Naive thymus-derived CD4-positive, alpha-beta T cell (primary cell): ENCODE measurements at regions of chr4 and their contacts with region 1.

Region 1: DNA sequence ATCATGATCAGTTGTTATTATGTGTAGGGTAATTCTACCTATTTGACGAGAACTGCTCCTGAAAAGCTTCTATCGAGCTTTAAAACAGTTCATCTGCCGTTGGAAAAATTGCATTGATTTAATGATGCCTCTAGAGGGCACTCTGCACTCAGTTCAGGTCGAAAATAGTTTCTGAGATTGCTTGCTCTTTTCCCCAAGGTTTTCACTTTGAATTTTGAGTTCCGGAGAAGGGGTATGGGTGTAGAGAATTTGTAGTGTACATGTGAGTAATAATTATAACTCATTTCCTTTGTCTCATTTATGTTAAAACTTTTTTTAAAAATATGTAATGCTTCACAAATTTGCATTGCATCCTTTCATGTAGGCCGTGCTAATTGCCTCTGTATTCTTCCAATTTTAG is 28.4 kb upstream of the TNIP3 start:
- DNase-seq: peak in 5 of 9 donors; percentile 31 to 56 (median 50)
- ATAC-seq: peak; percentile 51
- H3K4me3 ChIP-seq: no peak overlapping the region
- H3K4me3 Mint-ChIP-seq: peak overlapping the region; percentile 22 to 88 (median 79)
- H3K27ac ChIP-seq: peak overlapping the region; percentile 18
- H3K27ac Mint-ChIP-seq: peak overlapping the region; percentile 62 to 92 (median 81)
- H3K4me1 ChIP-seq: peaks cover 32 to 50% of the 10 kb centered on the region in 2 donors
- H3K4me1 Mint-ChIP-seq: peaks cover 22 to 57% (median 52%) of the 10 kb centered on the region in 7 donors
- H3K27me3 ChIP-seq: no peaks in the 10 kb centered on the region
- H3K27me3 Mint-ChIP-seq: no peaks in the 10 kb centered on the region

Region 2: GRCh38 chr4:120616041-120616440 is 576.4 kb before region 1 on chr4:
- CTCF ChIA-PET with region 1: no interaction called
- POLR2A ChIA-PET with region 1: no interaction called
- intact Hi-C with region 1: no loop called
- DNase-seq: no peak
- ATAC-seq: no peak
- H3K4me3 ChIP-seq: no peak overlapping the region
- H3K4me3 Mint-ChIP-seq: no peak overlapping the region
- H3K27ac ChIP-seq: no peak overlapping the region
- H3K27ac Mint-ChIP-seq: no peak overlapping the region
- H3K4me1 ChIP-seq: no peaks in the 10 kb centered on the region
- H3K4me1 Mint-ChIP-seq: no peaks in the 10 kb centered on the region
- H3K27me3 ChIP-seq: no peaks in the 10 kb centered on the region
- H3K27me3 Mint-ChIP-seq: peaks cover 0 to 16% (median 10%) of the 10 kb centered on the region in 5 donors

Region 3: DNA sequence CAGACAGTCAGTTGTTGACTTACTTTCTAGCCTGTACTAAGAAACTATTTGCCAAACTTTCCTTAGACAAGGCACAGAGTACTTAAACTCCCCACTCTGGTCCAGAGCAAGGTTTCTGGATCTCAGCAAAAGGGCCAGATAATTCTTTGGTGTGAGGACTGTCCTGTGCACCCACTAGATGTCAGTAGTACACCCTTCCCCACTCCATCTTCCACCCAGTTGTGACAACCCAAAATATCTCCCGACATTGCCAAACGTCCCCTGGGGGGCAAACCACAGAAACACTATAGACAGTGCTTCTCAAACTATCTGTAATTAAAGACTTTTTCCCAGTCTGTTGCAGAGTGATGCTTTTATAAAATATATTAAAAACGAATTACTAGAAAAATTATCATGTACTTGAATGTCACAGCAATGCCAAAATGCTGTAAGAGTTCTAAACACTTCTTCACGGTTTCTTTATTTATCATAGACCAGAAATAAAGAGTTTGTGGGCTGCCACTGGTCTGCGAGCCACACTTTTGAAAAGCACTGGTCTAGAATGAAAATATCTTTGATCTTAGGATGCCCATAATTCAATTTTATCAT is 473.4 kb before region 1 on chr4:
- CTCF ChIA-PET with region 1: no interaction called
- POLR2A ChIA-PET with region 1: no interaction called
- intact Hi-C with region 1: loop called in 1 of 2 experiments (anchors 5 kb)
- DNase-seq: peak in 6 of 9 donors; percentile 6 to 40 (median 36)
- ATAC-seq: peak; percentile 82
- H3K4me3 ChIP-seq: no peak overlapping the region
- H3K4me3 Mint-ChIP-seq: no peak overlapping the region
- H3K27ac ChIP-seq: no peak overlapping the region
- H3K27ac Mint-ChIP-seq: no peak overlapping the region
- H3K4me1 ChIP-seq: no peaks in the 10 kb centered on the region
- H3K4me1 Mint-ChIP-seq: peaks cover 0 to 2% (median 0%) of the 10 kb centered on the region in 7 donors
- H3K27me3 ChIP-seq: no peaks in the 10 kb centered on the region
- H3K27me3 Mint-ChIP-seq: peaks cover 0 to 16% (median 0%) of the 10 kb centered on the region in 5 donors

Region 4: DNA sequence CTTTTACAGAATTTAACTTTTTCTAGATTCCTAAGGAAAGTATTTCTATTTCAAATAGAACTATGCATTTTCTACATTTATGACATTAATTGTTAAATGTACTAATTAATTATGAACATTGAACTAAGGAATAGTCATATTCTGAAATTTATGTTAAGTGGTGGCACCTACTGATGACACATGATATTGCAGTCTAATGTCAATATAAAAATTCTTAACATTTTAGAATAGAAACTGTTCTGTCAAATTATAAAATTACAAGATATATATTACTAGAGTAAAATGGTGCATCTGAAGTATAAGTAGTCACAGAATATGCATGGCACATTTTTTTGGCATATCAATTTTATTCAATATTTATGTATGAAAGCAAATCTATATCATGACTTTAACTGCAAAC is 80.0 kb before region 1 on chr4:
- CTCF ChIA-PET with region 1: interaction called, 6 read pairs
- POLR2A ChIA-PET with region 1: no interaction called
- intact Hi-C with region 1: loop called (anchors 2 kb)
- DNase-seq: no peak
- ATAC-seq: no peak
- H3K4me3 ChIP-seq: no peak overlapping the region
- H3K4me3 Mint-ChIP-seq: no peak overlapping the region
- H3K27ac ChIP-seq: no peak overlapping the region
- H3K27ac Mint-ChIP-seq: no peak overlapping the region
- H3K4me1 ChIP-seq: peaks cover 0 to 3% of the 10 kb centered on the region in 2 donors
- H3K4me1 Mint-ChIP-seq: peaks cover 0 to 25% (median 20%) of the 10 kb centered on the region in 7 donors
- H3K27me3 ChIP-seq: no peaks in the 10 kb centered on the region
- H3K27me3 Mint-ChIP-seq: peaks cover 0 to 29% (median 0%) of the 10 kb centered on the region in 5 donors

Region 5: GRCh38 chr4:121176082-121176934 is 16.2 kb before region 1 on chr4:
- CTCF ChIA-PET with region 1: interaction called, 15 read pairs
- POLR2A ChIA-PET with region 1: interaction called, 13 read pairs
- intact Hi-C with region 1: loop called in 1 of 2 experiments (anchors 2 kb)
- DNase-seq: no peak
- ATAC-seq: peak; percentile 17
- H3K4me3 ChIP-seq: no peak overlapping the region
- H3K4me3 Mint-ChIP-seq: peak overlapping the region in 9 of 10 donors; percentile 34 to 87 (median 63)
- H3K27ac ChIP-seq: no peak overlapping the region
- H3K27ac Mint-ChIP-seq: peak overlapping the region in 8 of 9 donors; percentile 21 to 96 (median 75)
- H3K4me1 ChIP-seq: peaks cover 44 to 65% of the 10 kb centered on the region in 2 donors
- H3K4me1 Mint-ChIP-seq: peaks cover 53 to 89% (median 84%) of the 10 kb centered on the region in 7 donors
- H3K27me3 ChIP-seq: no peaks in the 10 kb centered on the region
- H3K27me3 Mint-ChIP-seq: no peaks in the 10 kb centered on the region

Region 6: DNA sequence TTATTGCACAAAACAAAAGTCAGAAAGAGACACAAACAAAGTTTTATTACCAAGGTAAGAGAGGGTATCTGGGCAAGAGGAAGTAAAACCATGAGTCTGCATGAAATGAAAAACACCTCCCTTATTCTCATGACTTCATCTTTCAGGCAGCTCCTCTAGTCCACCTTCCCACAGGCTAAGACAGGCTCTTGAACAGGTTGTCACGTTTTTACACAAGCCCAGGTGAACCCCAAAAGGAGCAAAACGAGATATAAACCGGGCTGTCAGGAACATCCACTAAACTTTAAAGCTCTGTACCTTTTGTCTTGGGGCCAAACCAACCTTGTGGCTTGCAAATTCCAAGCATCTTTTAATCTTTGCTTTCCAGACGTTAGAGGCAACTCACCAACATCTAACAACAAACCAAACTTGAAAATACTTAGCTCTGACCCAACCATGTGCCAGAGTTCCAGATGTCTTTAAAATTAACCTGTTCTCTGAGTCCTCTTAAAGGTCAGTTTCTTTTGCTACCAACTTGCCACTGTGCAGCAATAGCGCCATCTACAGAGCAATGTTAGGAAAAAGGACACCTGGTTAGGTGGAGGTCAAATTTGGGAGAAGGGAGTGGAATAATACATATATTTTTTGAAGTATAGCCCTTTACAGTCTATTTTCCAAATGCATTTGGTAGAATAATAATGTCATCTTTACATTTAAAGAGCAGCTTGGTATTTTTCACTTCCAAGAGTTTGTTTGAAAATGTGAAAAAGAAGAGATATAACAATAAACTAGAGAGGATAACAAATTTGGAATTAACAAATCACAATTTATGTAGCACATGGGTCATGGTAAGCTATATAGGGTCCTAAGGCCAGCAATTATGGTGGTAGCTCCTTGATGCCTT is 115.2 kb after region 1 on chr4:
- CTCF ChIA-PET with region 1: interaction called, 8 read pairs
- POLR2A ChIA-PET with region 1: interaction called, 3 read pairs
- intact Hi-C with region 1: loop called (anchors 1 kb)
- DNase-seq: peak in 7 of 9 donors; percentile 10 to 52 (median 33)
- ATAC-seq: peak; percentile 70
- H3K4me3 ChIP-seq: no peak overlapping the region
- H3K4me3 Mint-ChIP-seq: no peak overlapping the region
- H3K27ac ChIP-seq: no peak overlapping the region
- H3K27ac Mint-ChIP-seq: peak overlapping the region in 1 of 9 donors; percentile 39
- H3K4me1 ChIP-seq: peaks cover 0 to 9% of the 10 kb centered on the region in 2 donors
- H3K4me1 Mint-ChIP-seq: peaks cover 3 to 19% (median 15%) of the 10 kb centered on the region in 7 donors
- H3K27me3 ChIP-seq: no peaks in the 10 kb centered on the region
- H3K27me3 Mint-ChIP-seq: peaks cover 0 to 17% (median 0%) of the 10 kb centered on the region in 5 donors

Region 7: DNA sequence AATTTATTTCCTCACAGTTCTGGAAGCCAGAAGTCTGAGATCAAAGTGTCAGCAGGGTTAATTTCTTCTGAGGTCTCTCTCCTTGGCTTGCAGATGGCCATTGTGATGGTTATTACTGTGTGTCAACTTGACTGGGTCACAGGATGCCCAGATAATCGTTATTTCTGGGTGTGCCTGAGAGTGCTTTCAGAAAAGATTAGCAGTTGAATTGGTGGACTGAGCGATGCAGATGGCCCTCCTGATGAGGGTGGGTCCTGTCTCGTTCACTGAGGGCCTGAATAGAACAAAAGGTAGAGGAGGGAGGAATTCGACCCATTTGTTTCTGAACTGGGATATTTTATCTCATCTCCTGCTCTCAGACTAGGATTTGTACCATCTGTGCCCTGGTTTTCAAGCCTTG is 556.7 kb after region 1 on chr4:
- CTCF ChIA-PET with region 1: no interaction called
- POLR2A ChIA-PET with region 1: no interaction called
- intact Hi-C with region 1: no loop called
- DNase-seq: no peak
- ATAC-seq: no peak
- H3K4me3 ChIP-seq: no peak overlapping the region
- H3K4me3 Mint-ChIP-seq: no peak overlapping the region
- H3K27ac ChIP-seq: no peak overlapping the region
- H3K27ac Mint-ChIP-seq: no peak overlapping the region
- H3K4me1 ChIP-seq: no peaks in the 10 kb centered on the region
- H3K4me1 Mint-ChIP-seq: no peaks in the 10 kb centered on the region
- H3K27me3 ChIP-seq: no peaks in the 10 kb centered on the region
- H3K27me3 Mint-ChIP-seq: peaks cover 14 to 38% (median 30%) of the 10 kb centered on the region in 5 donors

Region 8: DNA sequence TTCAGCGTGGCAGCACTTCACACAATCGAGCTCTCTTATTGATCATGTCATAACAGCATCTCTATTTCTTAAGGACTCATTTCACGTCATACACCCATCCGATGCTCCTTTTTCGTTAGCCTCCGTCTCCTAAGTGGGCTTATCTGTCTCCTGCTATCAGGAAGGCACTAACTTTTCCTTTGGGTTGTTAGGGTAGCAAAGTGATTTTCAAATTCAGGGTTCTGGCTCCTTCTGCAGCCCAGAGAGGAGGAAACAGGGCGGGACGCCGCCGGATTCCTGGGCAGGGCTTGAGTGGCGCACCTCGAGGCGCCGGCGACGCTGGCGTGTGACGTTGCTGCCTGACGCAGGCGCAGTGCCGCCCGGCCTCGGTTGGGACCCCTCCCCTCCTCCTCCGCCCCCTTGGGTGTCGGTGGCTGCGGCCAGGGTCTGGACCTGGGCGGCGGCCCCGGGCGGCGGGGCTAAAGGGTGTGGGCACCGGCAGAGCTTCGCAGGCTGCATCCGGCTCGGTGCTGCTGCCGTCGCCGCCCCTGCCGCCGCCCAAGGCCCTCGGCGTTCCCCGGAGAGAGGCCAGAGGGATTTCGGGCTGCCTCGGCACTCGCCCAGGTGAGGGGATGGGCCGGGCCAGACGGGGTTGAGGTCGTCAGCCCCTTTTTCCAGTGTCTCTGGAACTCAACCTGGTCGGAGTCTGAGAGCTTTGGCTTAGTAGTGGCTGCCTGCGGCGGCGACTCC is 959.7 kb after region 1 on chr4 and contains the start of gene BLTP1:
- CTCF ChIA-PET with region 1: no interaction called
- POLR2A ChIA-PET with region 1: no interaction called
- intact Hi-C with region 1: loop called in 1 of 2 experiments (anchors 10 kb)
- DNase-seq: peak; percentile 81 to 92 (median 87)
- ATAC-seq: peak; percentile 95
- H3K4me3 ChIP-seq: peak within 1 kb of the TSS; percentile 96
- H3K4me3 Mint-ChIP-seq: peak within 1 kb of the TSS; percentile 79 to 98 (median 98)
- H3K27ac ChIP-seq: peak within 1 kb of the TSS; percentile 85
- H3K27ac Mint-ChIP-seq: peak within 1 kb of the TSS; percentile 90 to 100 (median 97)
- H3K4me1 ChIP-seq: peaks cover 22 to 28% of the 10 kb centered on the region in 2 donors
- H3K4me1 Mint-ChIP-seq: peaks cover 41 to 84% (median 72%) of the 10 kb centered on the region in 7 donors
- H3K27me3 ChIP-seq: no peaks in the 10 kb centered on the region
- H3K27me3 Mint-ChIP-seq: no peaks in the 10 kb centered on the region
- total RNA-seq, gene BLTP1: 45.9 to 86.6 (median 72.8) TPM